ENCODE measurements at regions of chr3 and their contacts with region 1.

Region 1: GRCh38 chr3:48400824-48401433 is 28.9 kb downstream of the FBXW12 start:
- DNase-seq: peak; percentile 77
- H3K4me3 Mint-ChIP-seq: no peak overlapping the region
- H3K27ac Mint-ChIP-seq: no peak overlapping the region
- H3K4me1 Mint-ChIP-seq: no peaks in the 10 kb centered on the region
- H3K27me3 Mint-ChIP-seq: peaks cover under 1% of the 10 kb centered on the region

Region 2: DNA sequence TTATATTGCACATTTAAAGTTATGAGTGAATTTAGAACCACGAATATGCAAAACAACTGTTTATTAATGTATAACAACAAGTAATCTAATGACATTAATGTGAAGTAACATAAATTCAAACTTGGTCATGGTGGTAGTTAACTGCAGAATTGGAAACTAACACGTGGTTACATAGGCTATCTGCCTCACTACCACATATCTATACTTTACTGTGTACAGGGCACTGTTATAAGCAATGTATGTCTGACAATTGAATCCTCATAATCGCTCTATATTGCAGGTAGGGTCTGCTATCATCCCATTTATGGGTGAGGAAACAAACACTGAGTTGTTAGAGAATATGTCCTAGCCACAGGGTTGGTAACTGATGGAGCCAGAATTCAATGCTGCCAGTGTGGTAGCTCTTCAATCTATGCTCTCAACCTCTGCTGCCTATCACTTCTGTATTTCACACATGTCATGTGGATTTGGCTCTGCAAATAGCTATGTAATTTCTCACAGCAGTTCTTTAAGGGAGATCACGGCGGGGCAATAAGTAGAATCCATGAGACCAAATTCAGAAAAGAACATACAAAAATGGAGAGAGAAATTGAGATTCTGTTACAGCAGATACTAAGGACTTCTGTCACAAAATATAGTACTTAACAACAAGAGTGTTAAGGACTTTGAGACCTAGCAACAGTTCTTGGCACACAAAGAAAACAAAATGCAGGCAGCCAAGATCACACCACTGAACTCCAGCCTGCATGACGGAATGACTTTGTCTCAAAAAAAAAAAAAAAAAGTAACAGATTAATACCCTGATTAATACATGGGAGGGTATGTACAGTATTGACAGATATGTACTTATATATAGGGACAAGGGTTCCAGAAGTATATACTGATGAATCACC is 722.2 kb before region 1 on chr3:
- CTCF ChIA-PET with region 1: no interaction called
- intact Hi-C with region 1: no loop called
- DNase-seq: no peak
- H3K4me3 Mint-ChIP-seq: no peak overlapping the region
- H3K27ac Mint-ChIP-seq: no peak overlapping the region
- H3K4me1 Mint-ChIP-seq: no peaks in the 10 kb centered on the region
- H3K27me3 Mint-ChIP-seq: no peaks in the 10 kb centered on the region

Region 3: DNA sequence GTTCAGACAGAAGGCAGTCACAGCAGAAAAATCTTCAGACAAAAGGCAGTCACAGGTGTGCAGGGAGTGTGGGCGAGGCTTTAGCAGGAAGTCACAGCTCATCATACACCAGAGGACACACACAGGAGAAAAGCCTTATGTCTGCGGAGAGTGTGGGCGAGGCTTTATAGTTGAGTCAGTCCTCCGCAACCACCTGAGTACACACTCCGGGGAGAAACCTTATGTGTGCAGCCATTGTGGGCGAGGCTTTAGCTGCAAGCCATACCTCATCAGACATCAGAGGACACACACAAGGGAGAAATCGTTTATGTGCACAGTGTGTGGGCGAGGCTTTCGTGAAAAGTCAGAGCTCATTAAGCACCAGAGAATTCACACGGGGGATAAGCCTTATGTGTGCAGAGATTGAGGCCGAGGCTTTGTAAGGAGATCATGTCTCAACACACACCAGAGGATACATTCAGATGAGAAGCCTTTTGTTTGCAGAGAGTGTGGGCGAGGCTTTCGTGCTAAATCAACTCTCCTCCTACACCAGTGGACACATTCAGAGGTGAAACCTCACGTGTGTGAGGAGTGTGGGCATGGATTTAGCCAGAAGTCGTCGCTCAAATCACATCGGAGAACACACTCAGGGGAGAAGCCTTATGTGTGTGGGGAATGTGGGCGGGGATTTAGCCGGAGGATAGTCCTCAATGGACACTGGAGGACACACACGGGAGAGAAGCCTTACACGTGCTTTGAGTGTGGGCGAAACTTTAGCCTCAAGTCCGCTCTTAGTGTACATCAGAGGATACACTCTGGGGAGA is 132.3 kb before region 1 on chr3:
- CTCF ChIA-PET with region 1: interaction called, 16 read pairs
- intact Hi-C with region 1: loop called (anchors 2 kb)
- DNase-seq: peak; percentile 96
- H3K4me3 Mint-ChIP-seq: peak overlapping the region; percentile 37
- H3K27ac Mint-ChIP-seq: peak overlapping the region; percentile 88
- H3K4me1 Mint-ChIP-seq: peaks cover 32% of the 10 kb centered on the region
- H3K27me3 Mint-ChIP-seq: no peaks in the 10 kb centered on the region

Region 4: GRCh38 chr3:48428830-48429316 is 27.9 kb after region 1 on chr3:
- CTCF ChIA-PET with region 1: interaction called, 10 read pairs
- intact Hi-C with region 1: no loop called
- DNase-seq: no peak
- H3K4me3 Mint-ChIP-seq: peak overlapping the region; percentile 44
- H3K27ac Mint-ChIP-seq: no peak overlapping the region
- H3K4me1 Mint-ChIP-seq: peaks cover 11% of the 10 kb centered on the region
- H3K27me3 Mint-ChIP-seq: peaks cover 7% of the 10 kb centered on the region

Region 5: GRCh38 chr3:48548729-48549705 is 148.1 kb after region 1 on chr3:
- CTCF ChIA-PET with region 1: interaction called, 83 read pairs
- intact Hi-C with region 1: loop called (anchors 1 kb)
- DNase-seq: peak; percentile 93
- H3K4me3 Mint-ChIP-seq: no peak overlapping the region
- H3K27ac Mint-ChIP-seq: no peak overlapping the region
- H3K4me1 Mint-ChIP-seq: peaks cover 4% of the 10 kb centered on the region
- H3K27me3 Mint-ChIP-seq: no peaks in the 10 kb centered on the region

Region 6: GRCh38 chr3:48685602-48686511 is 284.9 kb after region 1 on chr3 and contains the start of gene NCKIPSD:
- CTCF ChIA-PET with region 1: interaction called, 8 read pairs
- intact Hi-C with region 1: loop called (anchors 2 kb)
- DNase-seq: peak; percentile 91
- H3K4me3 Mint-ChIP-seq: peak within 1 kb of the TSS; percentile 83
- H3K27ac Mint-ChIP-seq: peak within 1 kb of the TSS; percentile 73
- H3K4me1 Mint-ChIP-seq: peaks cover 25% of the 10 kb centered on the region
- H3K27me3 Mint-ChIP-seq: no peaks in the 10 kb centered on the region
- total RNA-seq, gene NCKIPSD: 27.3 to 28.7 TPM

Region 7: GRCh38 chr3:49112262-49112661 is 711.3 kb after region 1 on chr3:
- CTCF ChIA-PET with region 1: no interaction called
- intact Hi-C with region 1: no loop called
- DNase-seq: no peak
- H3K4me3 Mint-ChIP-seq: no peak overlapping the region
- H3K27ac Mint-ChIP-seq: no peak overlapping the region
- H3K4me1 Mint-ChIP-seq: no peaks in the 10 kb centered on the region
- H3K27me3 Mint-ChIP-seq: no peaks in the 10 kb centered on the region